ENCODE measurements at regions of chr6 and their contacts with region 1.

Region 1: DNA sequence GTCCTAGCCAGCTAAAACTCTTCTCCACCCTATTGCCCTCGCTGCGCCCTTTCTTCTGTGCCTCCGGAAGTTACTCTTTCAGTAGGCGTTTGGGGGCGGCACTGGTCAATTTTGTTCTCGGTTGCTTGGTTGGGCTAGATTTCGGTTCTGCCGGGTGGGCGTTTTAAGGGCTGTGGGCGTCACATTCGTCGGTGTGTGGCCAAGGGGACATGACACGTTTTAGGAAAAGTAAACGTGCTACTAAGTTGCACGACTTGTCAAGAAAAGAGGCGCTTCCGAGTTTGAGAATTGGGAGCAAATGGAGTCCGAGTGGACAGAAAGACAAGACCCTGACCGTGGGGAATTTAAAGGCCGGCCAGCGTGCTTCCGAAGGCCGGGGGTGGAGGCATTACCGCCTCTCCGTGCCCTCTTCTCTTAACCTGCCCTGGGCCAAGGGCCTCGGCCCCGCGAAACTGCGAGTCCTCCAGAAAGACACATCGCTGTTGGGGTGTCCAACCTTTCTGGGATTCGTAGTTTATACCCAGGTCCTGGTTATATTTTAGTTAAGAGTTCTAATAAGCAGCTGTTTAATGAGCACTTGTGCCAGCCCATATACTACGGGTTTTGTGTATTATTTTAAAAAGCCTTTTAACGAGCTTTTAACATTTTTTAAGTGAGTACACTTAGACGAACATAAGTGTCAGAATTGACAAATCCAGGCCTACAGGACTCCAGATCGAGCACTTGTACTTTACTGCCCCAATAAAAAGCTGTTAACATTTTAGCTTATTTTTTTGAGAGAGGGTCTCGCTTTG is 661 bp upstream of the BAG6 start:
- DNase-seq: peak in 1 of 3 donors; percentile 83
- H3K4me3 ChIP-seq: peak overlapping the region; percentile 48 to 87 (median 76)
- H3K4me3 Mint-ChIP-seq: peak overlapping the region; percentile 93 to 99
- H3K27ac ChIP-seq: peak overlapping the region; percentile 95 to 98
- H3K27ac Mint-ChIP-seq: peak overlapping the region; percentile 99 to 100 (median 100)
- H3K4me1 ChIP-seq: peaks cover 20 to 40% of the 10 kb centered on the region in 2 donors
- H3K4me1 Mint-ChIP-seq: peaks cover 39% of the 10 kb centered on the region
- H3K27me3 ChIP-seq: no peaks in the 10 kb centered on the region
- H3K27me3 Mint-ChIP-seq: peaks cover 0 to 10% (median 5%) of the 10 kb centered on the region in 3 donors
- CTCF ChIP-seq: no peak

Region 2: DNA sequence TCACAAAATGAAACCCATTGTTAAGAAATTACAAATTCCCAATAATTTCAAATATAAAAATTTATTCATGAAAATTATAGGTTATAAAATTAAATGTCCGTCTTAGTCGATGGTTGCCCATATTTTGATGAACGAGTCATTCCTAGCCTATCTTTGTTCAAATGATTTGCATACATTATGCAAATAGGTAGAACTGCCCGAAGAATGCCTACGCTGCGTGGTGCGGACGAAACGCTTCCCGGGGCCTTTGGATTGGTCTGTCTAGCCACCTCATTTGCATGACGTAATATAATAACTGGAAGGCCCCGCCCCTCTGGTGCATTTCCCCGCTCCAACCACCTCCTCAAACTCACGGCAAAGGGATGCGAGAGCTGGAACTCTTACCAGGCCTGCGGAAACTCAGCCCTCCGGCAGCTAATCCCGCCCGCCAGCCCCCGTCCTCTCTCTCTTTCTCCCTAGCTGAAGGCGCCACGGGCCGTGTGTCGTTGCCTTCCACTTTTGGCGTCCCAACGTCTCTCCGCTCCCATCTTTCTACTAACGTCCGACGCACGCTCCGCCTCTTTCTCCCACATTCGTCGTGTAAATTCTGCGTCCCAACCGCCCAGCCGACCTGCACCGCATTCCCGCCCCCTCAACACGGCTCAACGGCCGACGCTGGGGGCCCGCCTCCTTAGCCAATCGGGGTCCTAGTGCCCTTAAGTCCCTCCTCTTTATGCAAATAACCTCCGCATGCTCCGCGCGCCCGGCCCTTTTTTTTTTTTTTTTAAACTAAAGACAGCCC is 33.1 kb before region 1 on chr6:
- intact Hi-C with region 1: loop called (anchors 2 kb)
- DNase-seq: peak; percentile 96 to 99 (median 98)
- H3K4me3 ChIP-seq: peak overlapping the region; percentile 79 to 97 (median 87)
- H3K4me3 Mint-ChIP-seq: peak overlapping the region; percentile 89 to 96
- H3K27ac ChIP-seq: peak overlapping the region; percentile 95 to 99
- H3K27ac Mint-ChIP-seq: peak overlapping the region; percentile 98 to 100 (median 100)
- H3K4me1 ChIP-seq: peaks cover 49 to 63% of the 10 kb centered on the region in 2 donors
- H3K4me1 Mint-ChIP-seq: peaks cover 60% of the 10 kb centered on the region
- H3K27me3 ChIP-seq: no peaks in the 10 kb centered on the region
- H3K27me3 Mint-ChIP-seq: peaks cover 0 to 1% (median 0%) of the 10 kb centered on the region in 3 donors
- CTCF ChIP-seq: no peak